ENCODE measurements at regions of chr13 and their contacts with region 1.

Region 1: DNA sequence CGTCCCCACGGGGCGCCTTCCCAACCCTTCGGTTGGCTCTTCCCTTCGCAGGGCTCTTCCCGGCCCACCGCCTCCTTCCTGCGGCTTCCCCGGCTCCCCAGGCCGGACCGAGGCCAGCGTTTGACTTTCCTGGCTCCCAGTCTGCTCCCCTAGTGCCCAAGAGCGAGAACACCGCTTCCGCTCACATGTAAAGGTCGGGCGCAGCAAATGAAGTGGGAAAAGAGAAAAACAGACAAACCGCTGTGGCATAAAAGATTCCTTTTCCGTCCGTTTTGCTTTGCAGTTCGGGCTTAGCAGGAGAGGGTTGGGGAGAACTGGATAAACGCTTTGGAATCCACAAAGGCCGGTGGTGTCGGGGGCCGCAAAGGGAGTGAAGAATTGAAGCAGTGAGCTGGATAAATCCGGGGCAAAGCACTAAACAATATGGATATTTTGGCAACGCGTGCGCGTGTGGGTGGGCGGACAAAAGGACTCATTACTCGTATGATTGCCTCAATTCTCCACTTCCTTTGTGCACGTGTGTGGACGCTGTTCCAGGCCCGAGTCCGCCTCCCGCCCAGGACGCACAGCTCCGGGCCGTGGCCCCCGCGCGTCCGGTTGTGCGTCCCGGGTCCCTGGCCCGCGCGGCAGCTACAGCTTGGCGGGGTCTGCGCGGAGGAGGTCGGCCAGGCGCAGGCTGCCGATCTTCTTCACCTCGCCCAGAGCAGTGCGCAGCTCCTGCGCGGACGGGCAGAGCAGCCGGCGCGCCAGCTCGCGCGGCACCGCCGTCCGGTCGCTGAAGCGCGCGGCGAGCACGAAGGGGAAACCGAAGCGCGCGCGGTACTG is 8.6 kb upstream of the CDX2 start:
- DNase-seq: no peak
- H3K4me3 Mint-ChIP-seq: no peak overlapping the region
- H3K27ac Mint-ChIP-seq: peak overlapping the region; percentile 74
- H3K4me1 Mint-ChIP-seq: peaks cover 26% of the 10 kb centered on the region
- H3K27me3 Mint-ChIP-seq: peaks cover 80% of the 10 kb centered on the region

Region 2: DNA sequence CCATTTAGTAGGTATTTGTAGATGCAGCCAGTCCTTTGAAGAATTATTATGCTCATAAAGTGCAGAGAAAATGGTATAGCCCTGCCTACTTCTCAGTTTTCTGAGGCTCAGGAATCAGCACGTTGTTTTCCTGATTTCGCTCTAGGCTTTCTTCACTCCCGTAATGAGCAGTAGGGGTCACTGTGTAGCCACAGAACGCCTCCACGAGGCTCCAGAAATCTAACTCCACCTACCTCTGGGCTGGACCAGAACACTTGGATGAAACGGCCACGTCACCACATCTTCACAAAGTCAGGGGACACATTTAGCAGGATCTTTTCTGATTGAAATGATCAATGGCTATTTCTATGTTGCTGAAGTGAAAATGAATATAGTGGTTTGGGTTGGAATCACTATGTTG is 603.0 kb before region 1 on chr13:
- CTCF ChIA-PET with region 1: interaction called, 22 read pairs
- POLR2A ChIA-PET with region 1: no interaction called
- intact Hi-C with region 1: no loop called
- DNase-seq: peak; percentile 70
- H3K4me3 Mint-ChIP-seq: no peak overlapping the region
- H3K27ac Mint-ChIP-seq: no peak overlapping the region
- H3K4me1 Mint-ChIP-seq: peaks cover 5% of the 10 kb centered on the region
- H3K27me3 Mint-ChIP-seq: peaks cover 20% of the 10 kb centered on the region

Region 3: DNA sequence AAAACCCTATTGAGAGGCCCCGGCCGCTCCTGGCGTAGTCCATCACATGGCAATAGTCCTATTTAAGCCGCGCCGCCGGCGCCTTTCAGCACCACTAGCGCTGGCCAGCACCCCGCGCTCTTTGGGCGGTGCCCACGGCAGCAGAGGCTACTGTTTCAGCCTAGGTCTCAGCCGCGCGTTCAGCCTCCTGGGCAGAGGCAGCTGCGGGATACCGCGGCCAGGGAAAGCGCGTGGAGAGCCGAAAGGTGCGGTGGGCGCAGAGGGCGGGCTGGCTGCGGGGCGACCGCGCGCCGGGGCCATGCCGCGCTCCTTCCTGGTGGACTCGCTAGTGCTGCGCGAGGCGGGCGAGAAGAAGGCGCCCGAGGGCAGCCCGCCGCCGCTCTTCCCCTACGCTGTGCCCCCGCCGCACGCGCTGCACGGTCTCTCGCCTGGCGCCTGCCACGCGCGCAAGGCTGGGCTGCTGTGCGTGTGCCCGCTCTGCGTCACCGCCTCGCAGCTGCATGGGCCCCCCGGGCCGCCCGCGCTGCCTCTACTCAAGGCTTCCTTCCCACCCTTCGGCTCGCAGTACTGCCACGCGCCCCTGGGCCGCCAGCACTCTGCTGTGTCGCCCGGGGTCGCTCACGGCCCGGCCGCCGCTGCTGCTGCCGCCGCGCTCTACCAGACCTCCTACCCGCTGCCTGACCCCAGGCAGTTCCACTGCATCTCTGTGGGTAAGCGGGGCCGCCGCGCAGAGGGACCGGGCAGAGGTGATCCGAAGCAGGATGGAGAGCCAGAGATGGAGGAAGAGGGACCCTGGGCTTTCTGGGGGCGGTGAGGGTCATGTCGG is 185.1 kb before region 1 on chr13 and contains the start of gene GSX1:
- CTCF ChIA-PET with region 1: no interaction called
- POLR2A ChIA-PET with region 1: no interaction called
- intact Hi-C with region 1: loop called (anchors 5 kb)
- DNase-seq: peak; percentile 68
- H3K4me3 Mint-ChIP-seq: peak within 1 kb of the TSS; percentile 66
- H3K27ac Mint-ChIP-seq: no peak within 1 kb of the TSS
- H3K4me1 Mint-ChIP-seq: peaks cover 36% of the 10 kb centered on the region
- H3K27me3 Mint-ChIP-seq: peaks cover 76% of the 10 kb centered on the region
- total RNA-seq, gene GSX1: not detected

Region 4: DNA sequence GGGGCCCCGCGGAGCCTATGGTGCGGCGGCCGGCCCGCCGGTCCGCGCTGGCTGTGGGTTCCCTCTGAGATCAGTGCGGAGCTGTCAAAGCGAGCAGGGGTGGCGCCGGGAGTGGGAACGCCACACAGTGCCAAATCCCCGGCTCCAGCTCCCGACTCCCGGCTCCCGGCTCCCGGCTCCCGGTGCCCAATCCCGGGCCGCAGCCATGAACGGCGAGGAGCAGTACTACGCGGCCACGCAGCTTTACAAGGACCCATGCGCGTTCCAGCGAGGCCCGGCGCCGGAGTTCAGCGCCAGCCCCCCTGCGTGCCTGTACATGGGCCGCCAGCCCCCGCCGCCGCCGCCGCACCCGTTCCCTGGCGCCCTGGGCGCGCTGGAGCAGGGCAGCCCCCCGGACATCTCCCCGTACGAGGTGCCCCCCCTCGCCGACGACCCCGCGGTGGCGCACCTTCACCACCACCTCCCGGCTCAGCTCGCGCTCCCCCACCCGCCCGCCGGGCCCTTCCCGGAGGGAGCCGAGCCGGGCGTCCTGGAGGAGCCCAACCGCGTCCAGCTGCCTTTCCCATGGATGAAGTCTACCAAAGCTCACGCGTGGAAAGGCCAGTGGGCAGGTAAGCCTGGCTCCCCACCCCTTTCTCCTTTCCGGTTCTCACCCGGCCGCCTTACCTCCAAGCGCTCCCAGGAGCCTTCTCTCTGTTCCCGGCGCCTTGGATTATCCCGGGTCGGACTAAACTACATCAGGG is 57.6 kb before region 1 on chr13 and contains the start of gene PDX1:
- CTCF ChIA-PET with region 1: no interaction called
- POLR2A ChIA-PET with region 1: no interaction called
- intact Hi-C with region 1: loop called (anchors 2 kb)
- DNase-seq: no peak
- H3K4me3 Mint-ChIP-seq: peak within 1 kb of the TSS; percentile 66
- H3K27ac Mint-ChIP-seq: peak within 1 kb of the TSS; percentile 6
- H3K4me1 Mint-ChIP-seq: peaks cover 37% of the 10 kb centered on the region
- H3K27me3 Mint-ChIP-seq: peaks cover 71% of the 10 kb centered on the region
- total RNA-seq, gene PDX1: not detected